Calu3 (cell line): ENCODE measurements at regions of chr6 and their contacts with region 1.

Region 1: GRCh38 chr6:11139056-11139960 is 27.8 kb upstream of the ERVFRD-1 start:
- DNase-seq: no peak
- H3K4me3 Mint-ChIP-seq: no peak overlapping the region
- H3K27ac Mint-ChIP-seq: no peak overlapping the region
- H3K4me1 Mint-ChIP-seq: peaks cover 37% of the 10 kb centered on the region
- H3K27me3 Mint-ChIP-seq: no peaks in the 10 kb centered on the region
- CTCF ChIP-seq: no peak

Region 2: DNA sequence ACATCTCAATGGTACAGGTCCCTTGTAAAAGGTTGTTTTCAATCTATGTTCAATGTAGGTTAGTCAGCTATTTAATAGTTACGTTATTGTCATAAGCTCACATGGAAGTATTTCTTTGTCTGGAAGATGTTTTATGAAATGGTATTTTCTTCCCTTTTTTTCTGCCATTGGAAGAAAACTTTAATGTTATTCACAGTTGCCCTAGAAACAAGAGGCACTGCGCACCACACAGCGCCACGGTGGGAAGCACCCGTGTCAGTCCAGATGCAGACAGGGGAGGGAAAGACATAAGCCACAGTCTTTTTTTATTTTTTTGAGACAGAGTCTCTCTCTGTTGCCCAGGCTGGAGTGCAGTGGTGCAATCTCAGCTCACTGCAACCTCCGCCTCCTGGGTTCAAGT is 536.1 kb before region 1 on chr6:
- CTCF ChIA-PET with region 1: no interaction called
- intact Hi-C with region 1: no loop called
- DNase-seq: no peak
- H3K4me3 Mint-ChIP-seq: no peak overlapping the region
- H3K27ac Mint-ChIP-seq: no peak overlapping the region
- H3K4me1 Mint-ChIP-seq: no peaks in the 10 kb centered on the region
- H3K27me3 Mint-ChIP-seq: no peaks in the 10 kb centered on the region
- CTCF ChIP-seq: no peak

Region 3: DNA sequence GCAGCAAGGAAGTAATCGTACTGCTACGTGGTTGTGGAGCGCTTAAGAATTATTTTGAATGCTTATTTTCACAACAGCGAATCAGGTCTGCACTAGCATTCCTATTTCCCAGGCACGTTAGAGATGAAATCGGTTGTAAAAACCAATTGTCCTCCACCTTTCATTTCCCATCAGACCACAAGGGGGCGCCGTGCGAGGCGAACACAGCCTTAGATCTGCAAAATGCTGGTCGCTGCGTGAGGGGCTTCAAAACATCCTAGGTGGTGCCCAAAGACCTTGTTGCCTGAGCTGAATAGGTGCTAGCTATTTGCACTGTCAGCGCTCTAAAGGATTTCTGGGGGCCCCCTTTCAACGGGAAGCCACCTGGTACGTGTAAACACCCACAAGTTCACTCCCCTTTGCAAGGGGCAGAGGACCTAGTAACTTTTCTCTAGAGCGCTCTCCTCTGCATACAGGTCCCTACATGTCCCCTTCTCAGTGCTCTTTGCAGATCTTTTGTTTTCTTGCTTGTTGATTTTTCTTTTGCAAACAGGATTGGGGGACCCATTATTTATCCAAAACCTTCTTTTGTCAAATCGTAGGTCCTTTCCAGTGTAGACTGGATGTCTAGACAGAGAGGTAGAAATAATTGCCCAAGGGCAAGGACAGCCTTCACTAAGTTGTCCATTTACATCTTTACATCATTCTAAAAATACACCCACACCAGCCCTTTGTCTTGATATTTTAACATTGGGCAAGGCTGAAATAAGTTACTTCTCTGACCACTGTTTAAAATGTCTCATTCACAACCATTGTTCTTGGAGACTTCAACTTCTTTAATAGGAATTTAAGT is 33.4 kb after region 1 on chr6:
- CTCF ChIA-PET with region 1: interaction called, 3 read pairs
- intact Hi-C with region 1: loop called (anchors 1 kb)
- DNase-seq: peak; percentile 68
- H3K4me3 Mint-ChIP-seq: no peak overlapping the region
- H3K27ac Mint-ChIP-seq: no peak overlapping the region
- H3K4me1 Mint-ChIP-seq: peaks cover 26% of the 10 kb centered on the region
- H3K27me3 Mint-ChIP-seq: no peaks in the 10 kb centered on the region
- CTCF ChIP-seq: peak; percentile 66